Activated CD4-positive, alpha-beta T cell treated with anti-CD3 and anti-CD28 coated beads, Interleukin-2, amount 10 ng/mL, durations not matched to agents 7 days and 5 days (primary cell): ENCODE measurements at regions of chr1 and their contacts with region 1.

Region 1: DNA sequence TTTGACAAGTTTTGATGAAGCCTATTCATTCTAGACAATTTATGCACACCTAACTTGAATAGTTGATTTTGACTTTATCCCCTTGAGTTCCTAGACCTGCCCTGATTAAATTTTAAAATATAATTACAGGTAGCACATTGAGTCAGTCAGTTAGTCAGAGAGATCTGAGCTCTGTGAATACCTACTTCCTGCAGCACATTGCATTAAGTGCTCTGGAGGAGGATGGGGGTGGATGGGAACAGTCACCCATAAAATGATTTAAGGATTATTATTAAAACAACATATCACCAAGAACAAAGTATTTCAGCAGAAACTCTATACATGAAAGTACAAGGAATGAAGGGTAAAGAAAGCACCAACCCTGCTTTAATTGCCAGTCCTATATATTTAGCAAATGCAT is 11.8 kb upstream of the RPF1 start:
- DNase-seq: no peak
- H3K4me3 Mint-ChIP-seq: no peak overlapping the region
- H3K27ac Mint-ChIP-seq: no peak overlapping the region
- H3K4me1 Mint-ChIP-seq: no peaks in the 10 kb centered on the region
- H3K27me3 Mint-ChIP-seq: peaks cover 45% of the 10 kb centered on the region

Region 2: GRCh38 chr1:83959824-83960498 is 507.3 kb before region 1 on chr1:
- CTCF ChIA-PET with region 1: no interaction called
- POLR2A ChIA-PET with region 1: interaction called, 13 read pairs
- DNase-seq: no peak
- H3K4me3 Mint-ChIP-seq: no peak overlapping the region
- H3K27ac Mint-ChIP-seq: no peak overlapping the region
- H3K4me1 Mint-ChIP-seq: no peaks in the 10 kb centered on the region
- H3K27me3 Mint-ChIP-seq: peaks cover 16% of the 10 kb centered on the region